Dendritic cell treated with granulocyte-macrophage colony-stimulating factor and Interleukin-4, amounts not matched to agents 40 ng/mL and 50 ng/mL, for 4 days (primary cell): ENCODE measurements at regions of chr13 and their contacts with region 1.

Region 1: GRCh38 chr13:58655086-58655485 is 1023.5 kb downstream of the PCDH17 start:
- H3K4me3 Mint-ChIP-seq: no peak overlapping the region
- H3K27ac Mint-ChIP-seq: peak overlapping the region; percentile 63
- H3K4me1 Mint-ChIP-seq: peaks cover 18% of the 10 kb centered on the region
- H3K27me3 Mint-ChIP-seq: no peaks in the 10 kb centered on the region

Region 2: GRCh38 chr13:58587183-58587582 is 67.9 kb before region 1 on chr13:
- intact Hi-C with region 1: loop called (anchors 5 kb)
- H3K4me3 Mint-ChIP-seq: no peak overlapping the region
- H3K27ac Mint-ChIP-seq: no peak overlapping the region
- H3K4me1 Mint-ChIP-seq: peaks cover 17% of the 10 kb centered on the region
- H3K27me3 Mint-ChIP-seq: no peaks in the 10 kb centered on the region

Region 3: DNA sequence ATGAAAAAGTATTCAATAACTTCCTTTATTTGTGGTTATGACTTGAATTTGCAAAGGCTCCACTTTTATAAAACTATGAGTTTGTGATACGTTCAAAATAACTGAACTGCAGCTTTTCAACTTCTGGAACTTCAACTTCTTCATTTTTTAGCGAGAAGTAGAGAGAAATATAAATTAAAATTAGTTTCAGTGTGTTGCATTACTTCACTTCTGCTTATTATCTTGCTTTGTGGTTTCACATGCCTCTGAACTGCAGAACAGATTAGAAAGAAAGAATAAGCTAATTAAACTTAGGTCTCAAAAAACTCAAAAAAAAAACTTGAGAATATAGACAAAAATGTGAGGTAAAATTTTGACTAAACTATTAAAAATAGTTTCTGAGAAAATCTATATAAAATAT is 49.9 kb after region 1 on chr13:
- intact Hi-C with region 1: loop called (anchors 5 kb)
- H3K4me3 Mint-ChIP-seq: no peak overlapping the region
- H3K27ac Mint-ChIP-seq: peak overlapping the region; percentile 66
- H3K4me1 Mint-ChIP-seq: peaks cover 28% of the 10 kb centered on the region
- H3K27me3 Mint-ChIP-seq: peaks cover 9% of the 10 kb centered on the region